ENCODE measurements at regions of chr1 and their contacts with region 1.

Region 1: DNA sequence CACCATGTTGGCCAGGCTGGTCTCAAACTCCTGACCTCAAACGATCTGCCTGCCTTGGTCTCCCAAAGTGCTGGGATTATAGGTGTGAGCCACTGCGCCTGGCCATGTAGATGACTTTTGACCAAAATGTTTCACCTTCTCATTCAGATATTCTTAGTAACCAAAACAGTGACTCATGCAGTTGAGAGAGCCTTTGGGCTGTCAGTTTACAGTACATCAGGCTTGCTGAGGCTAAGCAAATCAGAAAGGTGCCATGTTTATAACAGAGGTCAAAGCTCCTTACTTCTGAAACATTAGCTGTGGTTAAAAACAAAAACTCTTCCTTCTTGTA is 21.0 kb downstream of the CNIH4 start:
- DNase-seq: no peak
- H3K4me3 Mint-ChIP-seq: peak overlapping the region; percentile 41
- H3K27ac Mint-ChIP-seq: peak overlapping the region; percentile 87
- H3K4me1 Mint-ChIP-seq: peaks cover 90% of the 10 kb centered on the region
- H3K27me3 Mint-ChIP-seq: no peaks in the 10 kb centered on the region

Region 2: DNA sequence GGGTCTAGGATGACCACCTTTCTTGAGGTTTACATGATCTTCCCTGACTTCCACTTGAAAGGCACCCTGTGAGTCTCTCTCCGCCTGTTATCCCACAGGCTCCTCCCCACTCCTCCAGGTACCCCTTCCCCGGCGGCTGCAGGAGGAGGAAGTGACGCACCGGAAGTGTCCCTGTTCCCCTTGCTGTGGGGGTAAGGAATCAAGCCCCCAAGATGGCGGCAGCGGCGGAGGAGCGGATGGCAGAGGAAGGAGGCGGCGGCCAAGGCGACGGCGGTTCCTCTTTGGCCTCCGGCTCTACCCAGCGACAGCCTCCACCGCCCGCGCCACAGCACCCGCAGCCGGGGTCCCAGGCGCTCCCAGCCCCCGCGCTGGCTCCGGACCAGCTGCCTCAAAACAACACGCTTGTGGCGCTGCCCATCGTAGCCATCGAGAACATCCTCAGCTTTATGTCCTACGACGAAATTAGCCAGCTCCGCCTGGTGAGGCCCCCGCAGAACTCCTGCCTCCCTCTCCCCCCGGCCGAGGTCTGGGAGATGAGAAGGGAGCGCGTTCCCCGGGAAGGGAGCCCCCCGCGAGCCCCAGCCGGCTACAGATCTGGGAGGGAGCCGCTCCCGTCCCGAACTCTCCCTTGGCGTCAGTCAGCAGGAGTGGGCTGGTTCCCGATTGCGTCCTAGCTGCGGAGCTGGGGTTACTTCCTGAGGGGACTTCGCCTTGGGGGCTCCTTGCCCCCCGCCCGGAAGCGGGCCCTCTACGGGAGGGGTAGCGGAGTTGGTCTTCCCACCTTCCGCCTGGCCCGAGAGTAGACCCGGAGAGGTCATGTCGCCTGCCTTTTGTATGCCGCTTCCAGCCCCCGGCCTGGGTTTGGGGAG is 263.5 kb before region 1 on chr1 and contains the start of gene FBXO28:
- intact Hi-C with region 1: loop called (anchors 5 kb)
- DNase-seq: peak; percentile 90
- H3K4me3 Mint-ChIP-seq: peak within 1 kb of the TSS; percentile 80
- H3K27ac Mint-ChIP-seq: peak within 1 kb of the TSS; percentile 79
- H3K4me1 Mint-ChIP-seq: peaks cover 25% of the 10 kb centered on the region
- H3K27me3 Mint-ChIP-seq: peaks cover 17% of the 10 kb centered on the region
- total RNA-seq, gene FBXO28: 22.9 and 24.3 TPM in 2 replicates

Region 3: GRCh38 chr1:224266105-224266935 is 111.3 kb before region 1 on chr1:
- intact Hi-C with region 1: loop called (anchors 5 kb)
- DNase-seq: no peak
- H3K4me3 Mint-ChIP-seq: peak overlapping the region; percentile 3
- H3K27ac Mint-ChIP-seq: peak overlapping the region; percentile 82
- H3K4me1 Mint-ChIP-seq: peaks cover 38% of the 10 kb centered on the region
- H3K27me3 Mint-ChIP-seq: no peaks in the 10 kb centered on the region

Region 4: DNA sequence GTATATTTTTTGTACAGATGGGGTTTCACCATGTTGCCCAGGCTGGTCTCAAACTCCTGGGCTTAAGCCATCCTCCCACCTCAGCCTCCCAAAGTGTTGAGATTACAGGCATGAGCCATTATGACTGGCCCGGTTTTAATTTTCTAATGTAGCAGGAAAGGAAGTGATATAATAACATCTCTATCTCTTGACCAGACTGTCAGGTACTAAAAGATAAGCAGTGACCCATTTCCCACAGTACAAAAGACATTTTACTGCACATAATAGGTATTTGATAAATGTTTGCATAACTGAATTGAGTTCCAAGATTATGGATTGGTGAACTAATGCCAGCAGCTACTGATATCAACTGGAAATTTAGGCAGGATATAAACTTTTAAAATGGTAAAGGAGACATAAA is 51.7 kb before region 1 on chr1:
- intact Hi-C with region 1: no loop called
- DNase-seq: no peak
- H3K4me3 Mint-ChIP-seq: no peak overlapping the region
- H3K27ac Mint-ChIP-seq: no peak overlapping the region
- H3K4me1 Mint-ChIP-seq: peaks cover 38% of the 10 kb centered on the region
- H3K27me3 Mint-ChIP-seq: no peaks in the 10 kb centered on the region

Region 5: GRCh38 chr1:224392411-224393249 is 15.0 kb after region 1 on chr1:
- intact Hi-C with region 1: loop called (anchors 2 kb)
- DNase-seq: no peak
- H3K4me3 Mint-ChIP-seq: no peak overlapping the region
- H3K27ac Mint-ChIP-seq: peak overlapping the region; percentile 72
- H3K4me1 Mint-ChIP-seq: peaks cover 29% of the 10 kb centered on the region
- H3K27me3 Mint-ChIP-seq: no peaks in the 10 kb centered on the region

Region 6: GRCh38 chr1:224497714-224498573 is 120.3 kb after region 1 on chr1:
- intact Hi-C with region 1: loop called (anchors 2 kb)
- DNase-seq: peak; percentile 68
- H3K4me3 Mint-ChIP-seq: peak overlapping the region; percentile 60
- H3K27ac Mint-ChIP-seq: peak overlapping the region; percentile 96
- H3K4me1 Mint-ChIP-seq: peaks cover 52% of the 10 kb centered on the region
- H3K27me3 Mint-ChIP-seq: no peaks in the 10 kb centered on the region

Region 7: GRCh38 chr1:224668984-224669383 is 291.3 kb after region 1 on chr1:
- intact Hi-C with region 1: no loop called
- DNase-seq: no peak
- H3K4me3 Mint-ChIP-seq: no peak overlapping the region
- H3K27ac Mint-ChIP-seq: no peak overlapping the region
- H3K4me1 Mint-ChIP-seq: no peaks in the 10 kb centered on the region
- H3K27me3 Mint-ChIP-seq: peaks cover 16% of the 10 kb centered on the region